ENCODE measurements at regions of chr14 and their contacts with region 1.

Region 1: DNA sequence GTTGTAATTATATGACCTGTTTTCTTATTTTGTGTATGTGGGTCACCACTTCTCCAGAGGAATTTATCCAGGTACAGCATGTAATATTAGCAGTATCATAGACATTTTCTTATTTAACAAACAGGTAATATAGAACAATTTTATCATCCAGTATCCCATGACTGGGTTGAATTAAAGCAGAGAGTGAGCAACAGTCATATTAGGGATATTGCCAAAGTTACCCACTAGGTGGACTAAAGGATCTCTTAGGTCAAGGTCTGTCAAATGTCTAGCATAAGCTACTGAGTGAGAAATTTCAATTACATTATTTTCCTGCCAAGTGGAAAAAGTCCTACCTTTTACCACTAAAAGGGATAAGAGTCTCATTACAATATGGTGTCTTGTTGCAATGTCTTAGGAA is 62.1 kb upstream of the TRIM9 start:
- DNase-seq: no peak
- CTCF ChIP-seq: peak; percentile 36

Region 2: DNA sequence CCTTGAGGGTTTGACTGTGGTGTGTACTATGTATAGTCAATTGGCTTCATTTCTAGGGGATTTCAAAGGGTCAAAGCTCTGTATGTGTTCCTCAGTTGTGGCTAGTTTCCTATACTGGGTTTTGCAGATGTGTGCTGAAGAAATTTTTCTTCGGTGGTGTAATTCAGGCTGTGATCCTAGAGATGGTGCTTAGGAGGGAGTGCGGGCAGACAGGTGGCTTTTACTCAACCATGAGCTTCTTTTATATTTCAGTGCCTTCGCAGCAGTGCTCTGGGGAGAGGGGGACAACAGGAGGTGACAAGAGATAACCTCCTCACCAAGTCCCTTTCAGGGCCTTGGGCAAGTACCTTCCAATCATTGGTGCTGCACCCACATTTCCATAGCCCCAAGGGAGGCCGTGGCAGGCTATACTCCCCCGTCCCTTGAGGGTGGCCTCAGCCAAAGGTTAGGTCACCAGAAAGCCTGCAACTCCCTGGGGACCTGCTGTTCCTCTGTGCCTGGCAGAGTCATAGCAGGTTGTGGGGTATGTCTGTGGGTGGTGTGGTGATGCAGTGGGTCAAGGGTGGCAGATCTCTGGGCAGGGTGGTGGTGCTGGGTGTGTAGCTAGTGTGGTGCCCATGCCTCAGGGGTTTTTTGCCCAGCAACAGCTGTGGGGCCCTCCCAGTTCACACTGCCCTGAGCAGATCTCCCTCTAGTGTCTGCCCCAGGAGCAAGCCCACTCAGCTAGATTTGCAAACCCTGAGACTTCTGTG is 46.1 kb after region 1 on chr14:
- CTCF ChIA-PET with region 1: interaction called, 11 read pairs
- POLR2A ChIA-PET with region 1: no interaction called
- DNase-seq: peak; percentile 35
- CTCF ChIP-seq: peak; percentile 48

Region 3: DNA sequence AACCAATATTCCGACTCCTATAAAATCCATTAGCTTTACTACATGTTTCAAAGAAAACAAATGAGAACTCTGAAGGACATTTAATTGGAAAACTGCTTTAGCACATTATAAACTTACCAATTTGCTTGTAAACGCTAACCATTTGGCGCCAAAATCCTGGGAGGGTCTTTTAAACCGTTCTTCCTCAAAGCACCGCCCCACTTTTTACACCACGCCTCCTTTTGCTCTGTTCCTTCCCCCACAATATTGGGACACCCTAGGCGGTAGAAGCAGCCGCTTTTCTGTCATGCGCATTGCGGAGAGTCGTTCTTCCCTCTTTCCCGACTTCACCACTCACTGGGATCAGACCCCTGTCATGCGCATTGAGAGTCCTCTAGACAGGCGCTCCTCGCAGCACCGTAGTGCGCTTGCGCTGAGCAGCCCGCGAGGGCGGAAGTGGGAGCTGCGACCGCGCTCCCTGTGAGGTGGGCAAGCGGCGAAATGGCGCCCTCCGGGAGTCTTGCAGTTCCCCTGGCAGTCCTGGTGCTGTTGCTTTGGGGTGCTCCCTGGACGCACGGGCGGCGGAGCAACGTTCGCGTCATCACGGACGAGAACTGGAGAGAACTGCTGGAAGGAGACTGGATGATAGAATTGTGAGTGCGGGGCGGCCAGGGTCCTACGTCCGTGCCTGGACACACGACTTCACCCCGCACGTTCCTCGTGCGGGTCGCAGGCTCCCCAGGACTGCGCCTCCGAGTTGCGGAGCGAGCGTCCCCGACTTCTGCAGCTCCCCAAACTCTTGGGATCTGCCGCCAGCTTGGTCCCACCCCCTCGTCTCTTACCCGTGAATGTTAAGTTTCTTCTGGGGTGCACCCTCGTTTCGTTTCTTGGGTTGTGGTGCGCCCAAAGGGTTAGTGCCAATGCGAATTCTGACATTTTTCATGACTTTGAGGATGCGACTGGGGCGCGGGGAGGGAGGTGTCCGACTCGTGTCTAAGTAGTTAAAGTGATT is 83.1 kb after region 1 on chr14 and contains the start of gene TMX1:
- CTCF ChIA-PET with region 1: no interaction called
- POLR2A ChIA-PET with region 1: no interaction called
- DNase-seq: peak; percentile 95
- CTCF ChIP-seq: no peak

Measured in GM10248 (cell line).